ENCODE measurements at regions of chr1 and their contacts with region 1.

Region 1: GRCh38 chr1:25022361-25023189 is 92.5 kb upstream of the RUNX3 start:
- DNase-seq: peak; percentile 98
- ATAC-seq: peak; percentile 78
- H3K4me3 ChIP-seq: peak overlapping the region in 4 of 5 experiments; percentile 2 to 32 (median 23)
- H3K4me3 Mint-ChIP-seq: peak overlapping the region; percentile 78
- H3K27ac ChIP-seq: peak overlapping the region; percentile 97
- H3K27ac Mint-ChIP-seq: peak overlapping the region; percentile 94
- H3K4me1 ChIP-seq: peaks cover 49 to 67% of the 10 kb centered on the region in 2 donors
- H3K4me1 Mint-ChIP-seq: peaks cover 65% of the 10 kb centered on the region
- H3K27me3 ChIP-seq: no peaks in the 10 kb centered on the region
- H3K27me3 Mint-ChIP-seq: no peaks in the 10 kb centered on the region
- CTCF ChIP-seq: no peak

Region 2: DNA sequence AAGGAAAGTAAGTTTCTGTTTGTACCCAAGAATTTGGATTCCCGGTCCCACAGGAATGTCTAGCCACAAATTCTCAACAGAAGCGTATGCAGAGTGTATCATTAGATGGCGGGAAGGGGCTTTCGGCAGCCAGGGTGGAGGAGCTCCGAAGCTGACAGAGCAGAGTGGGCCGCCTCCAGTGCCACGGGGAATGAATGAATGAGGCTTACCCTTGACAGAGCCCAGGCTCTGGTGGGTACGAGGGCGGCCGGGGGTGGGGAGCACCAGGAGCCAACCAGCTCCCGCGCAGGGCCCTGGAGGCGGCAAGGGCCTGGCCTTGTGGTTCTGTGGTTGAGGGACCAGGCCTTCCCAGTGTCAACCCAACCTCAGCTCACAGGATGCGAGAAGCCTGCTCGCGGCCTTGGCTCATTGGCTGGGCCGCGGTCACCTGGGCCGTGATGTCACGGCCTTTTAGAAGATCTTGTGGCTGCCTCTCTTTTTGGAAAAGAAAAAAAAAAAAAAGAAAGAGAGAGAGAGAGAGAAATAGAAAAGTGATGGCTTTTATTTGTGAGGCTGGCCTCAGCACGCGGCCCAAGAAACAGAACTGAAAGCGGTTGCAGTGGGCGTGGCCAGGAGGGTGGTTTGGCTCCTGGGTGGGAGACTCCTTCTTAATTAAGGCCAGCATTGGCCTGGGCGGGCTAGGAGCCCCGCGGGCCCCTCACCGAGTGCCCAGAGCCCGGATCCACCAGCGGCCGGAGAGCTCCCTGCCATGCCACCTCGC is 57.6 kb before region 1 on chr1:
- CTCF ChIA-PET with region 1: interaction called, 9 read pairs
- POLR2A ChIA-PET with region 1: interaction called, 5 read pairs
- intact Hi-C with region 1: loop called (anchors 1 kb)
- DNase-seq: peak; percentile 93
- ATAC-seq: peak; percentile 88
- H3K4me3 ChIP-seq: peak overlapping the region in 4 of 5 experiments; percentile 10 to 40 (median 24)
- H3K4me3 Mint-ChIP-seq: peak overlapping the region; percentile 79
- H3K27ac ChIP-seq: peak overlapping the region; percentile 75 to 77
- H3K27ac Mint-ChIP-seq: peak overlapping the region; percentile 89
- H3K4me1 ChIP-seq: peaks cover 21 to 44% of the 10 kb centered on the region in 2 donors
- H3K4me1 Mint-ChIP-seq: peaks cover 50% of the 10 kb centered on the region
- H3K27me3 ChIP-seq: no peaks in the 10 kb centered on the region
- H3K27me3 Mint-ChIP-seq: no peaks in the 10 kb centered on the region
- CTCF ChIP-seq: no peak

Region 3: GRCh38 chr1:24987875-24988557 is 34.6 kb before region 1 on chr1:
- CTCF ChIA-PET with region 1: interaction called, 6 read pairs
- POLR2A ChIA-PET with region 1: interaction called, 7 read pairs
- intact Hi-C with region 1: loop called (anchors 5 kb)
- DNase-seq: peak; percentile 76
- ATAC-seq: peak; percentile 88
- H3K4me3 ChIP-seq: no peak overlapping the region
- H3K4me3 Mint-ChIP-seq: peak overlapping the region; percentile 53
- H3K27ac ChIP-seq: peak overlapping the region; percentile 12 to 27
- H3K27ac Mint-ChIP-seq: peak overlapping the region; percentile 80
- H3K4me1 ChIP-seq: peaks cover 16 to 22% of the 10 kb centered on the region in 2 donors
- H3K4me1 Mint-ChIP-seq: peaks cover 33% of the 10 kb centered on the region
- H3K27me3 ChIP-seq: peaks cover 0 to 3% (median 0%) of the 10 kb centered on the region in 4 experiments
- H3K27me3 Mint-ChIP-seq: no peaks in the 10 kb centered on the region
- CTCF ChIP-seq: no peak

Region 4: DNA sequence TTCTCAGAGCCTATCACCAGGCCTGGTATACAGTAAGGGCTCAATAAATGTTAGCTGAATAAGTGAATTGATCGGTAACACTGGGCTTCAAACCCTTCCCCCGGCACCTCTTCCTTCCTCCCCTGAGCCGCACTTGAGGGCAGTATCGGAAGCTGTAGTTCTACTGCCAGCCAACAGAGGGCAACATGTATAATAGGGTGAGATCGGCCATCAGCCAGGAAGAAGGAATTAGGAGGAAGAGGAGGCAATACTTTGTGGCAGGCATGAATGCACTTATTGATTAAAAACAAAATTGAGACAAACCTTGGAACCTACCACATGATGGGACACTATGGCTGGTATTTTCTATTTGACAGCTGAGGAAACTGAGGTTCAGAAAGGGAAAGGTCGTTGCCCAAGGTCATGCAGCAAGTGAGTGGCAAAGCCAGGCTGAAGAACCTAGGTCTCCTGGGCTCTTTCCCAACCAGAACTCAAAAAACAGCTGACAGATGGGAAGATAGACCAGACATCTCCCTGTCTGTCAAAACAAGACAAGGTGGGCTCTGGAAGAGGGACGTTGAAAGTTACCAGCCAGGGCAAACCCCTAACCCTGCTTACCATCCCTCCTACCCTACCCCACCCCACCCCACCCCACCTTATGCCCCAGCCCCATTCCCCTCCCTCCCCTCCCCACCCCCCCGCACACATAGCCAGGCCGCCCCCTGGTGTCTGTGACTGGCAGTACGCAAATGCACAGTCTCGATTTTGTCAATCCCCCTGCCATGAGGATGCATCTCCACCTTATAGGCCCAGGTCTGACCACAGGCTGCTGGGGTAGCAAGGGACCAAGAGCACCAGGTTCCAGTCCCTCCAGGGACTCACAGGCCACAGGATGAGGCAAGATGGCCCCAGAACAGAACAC is 14.8 kb after region 1 on chr1:
- CTCF ChIA-PET with region 1: interaction called, 38 read pairs
- POLR2A ChIA-PET with region 1: interaction called, 46 read pairs
- intact Hi-C with region 1: loop called (anchors 1 kb)
- DNase-seq: peak; percentile 74
- ATAC-seq: peak; percentile 65
- H3K4me3 ChIP-seq: no peak overlapping the region
- H3K4me3 Mint-ChIP-seq: peak overlapping the region; percentile 0
- H3K27ac ChIP-seq: no peak overlapping the region
- H3K27ac Mint-ChIP-seq: peak overlapping the region; percentile 63
- H3K4me1 ChIP-seq: peaks cover 36 to 49% of the 10 kb centered on the region in 2 donors
- H3K4me1 Mint-ChIP-seq: peaks cover 34% of the 10 kb centered on the region
- H3K27me3 ChIP-seq: peaks cover 0 to under 1% (median 0%) of the 10 kb centered on the region in 4 experiments
- H3K27me3 Mint-ChIP-seq: peaks cover 5% of the 10 kb centered on the region
- CTCF ChIP-seq: peak; percentile 71

Region 5: DNA sequence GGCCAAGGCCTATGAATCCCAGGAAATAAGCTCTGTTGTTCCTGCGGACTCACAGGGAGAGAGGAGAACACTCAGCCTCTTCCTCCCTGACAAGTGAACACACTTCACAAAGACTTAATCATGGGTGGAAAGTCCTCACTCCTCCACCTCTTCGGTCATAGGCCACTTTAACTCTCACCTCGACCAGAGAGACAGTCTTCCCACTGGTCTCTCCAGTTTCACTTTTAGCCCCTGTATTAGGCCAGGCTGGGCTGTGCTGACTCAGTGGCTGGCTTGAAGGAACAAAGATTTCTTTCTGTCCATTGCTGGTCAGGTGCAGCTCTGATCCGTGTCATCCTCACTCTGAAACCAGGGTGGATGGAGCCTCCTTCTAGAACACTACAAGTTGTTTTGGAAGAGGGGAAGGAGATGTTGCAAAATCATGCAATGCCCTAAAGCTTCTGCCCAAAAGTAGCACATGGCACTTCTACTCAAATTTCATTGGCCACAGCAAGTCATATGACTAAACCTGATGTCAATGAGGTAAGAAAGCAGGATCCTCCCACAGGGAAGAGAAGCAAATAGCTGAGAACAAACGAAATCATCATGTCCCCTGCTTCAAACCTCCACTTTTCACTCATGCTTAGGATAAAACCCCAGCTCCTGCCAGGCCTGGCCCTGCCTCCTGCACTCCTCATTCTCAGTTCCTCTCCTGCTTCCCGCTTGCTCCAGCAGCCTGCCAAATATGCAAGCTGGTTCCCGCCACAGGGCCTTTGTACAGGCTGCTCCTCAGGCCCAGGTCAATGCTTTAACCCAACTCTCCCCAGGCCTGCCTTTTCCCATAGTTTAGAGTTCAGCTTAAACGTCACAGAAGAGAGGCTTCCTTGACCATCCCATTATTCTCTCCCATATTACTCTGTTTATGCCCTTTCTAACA is 58.0 kb after region 1 on chr1:
- CTCF ChIA-PET with region 1: no interaction called
- POLR2A ChIA-PET with region 1: no interaction called
- intact Hi-C with region 1: no loop called
- DNase-seq: no peak
- ATAC-seq: no peak
- H3K4me3 ChIP-seq: no peak overlapping the region
- H3K4me3 Mint-ChIP-seq: no peak overlapping the region
- H3K27ac ChIP-seq: no peak overlapping the region
- H3K27ac Mint-ChIP-seq: no peak overlapping the region
- H3K4me1 ChIP-seq: no peaks in the 10 kb centered on the region
- H3K4me1 Mint-ChIP-seq: no peaks in the 10 kb centered on the region
- H3K27me3 ChIP-seq: no peaks in the 10 kb centered on the region
- H3K27me3 Mint-ChIP-seq: no peaks in the 10 kb centered on the region
- CTCF ChIP-seq: no peak

Region 6: DNA sequence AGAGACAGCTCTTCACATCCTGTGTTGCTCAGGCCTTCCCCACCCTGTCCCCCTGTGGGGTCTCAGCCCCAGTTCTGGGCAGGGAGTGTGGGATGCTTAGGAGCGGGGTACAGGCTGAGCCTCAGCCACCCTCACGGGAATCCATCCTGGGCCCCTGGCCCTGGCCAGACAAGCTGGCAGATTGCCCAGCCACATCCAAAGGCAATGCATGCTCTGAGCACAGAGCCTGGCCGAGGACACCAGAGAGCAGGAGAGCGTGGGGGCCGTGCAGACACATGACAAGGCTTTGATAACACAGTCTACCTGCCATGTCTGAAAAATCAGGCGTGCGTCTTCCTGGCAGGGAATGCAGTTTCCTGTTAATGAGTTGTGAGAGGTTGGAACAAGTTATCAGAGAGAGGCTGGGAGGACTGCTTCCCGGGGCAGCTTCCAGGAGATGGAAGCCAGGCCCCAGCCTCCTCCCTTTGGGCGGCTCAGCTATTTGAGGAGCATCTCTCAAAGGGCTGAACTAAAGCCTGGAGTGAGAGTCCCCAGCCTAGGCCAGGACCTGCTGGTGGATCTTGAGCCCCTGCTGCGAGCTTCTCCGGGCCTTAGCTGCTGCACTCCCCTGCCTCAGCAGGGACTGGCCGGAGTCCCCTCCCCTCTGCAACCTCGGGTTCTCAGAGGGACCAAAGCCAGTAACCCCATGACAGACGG is 705.2 kb after region 1 on chr1:
- CTCF ChIA-PET with region 1: no interaction called
- POLR2A ChIA-PET with region 1: no interaction called
- intact Hi-C with region 1: no loop called
- DNase-seq: no peak
- ATAC-seq: no peak
- H3K4me3 ChIP-seq: no peak overlapping the region
- H3K4me3 Mint-ChIP-seq: no peak overlapping the region
- H3K27ac ChIP-seq: no peak overlapping the region
- H3K27ac Mint-ChIP-seq: no peak overlapping the region
- H3K4me1 ChIP-seq: peaks cover 0 to 4% of the 10 kb centered on the region in 2 donors
- H3K4me1 Mint-ChIP-seq: peaks cover 5% of the 10 kb centered on the region
- H3K27me3 ChIP-seq: peaks cover 0 to 12% (median 2%) of the 10 kb centered on the region in 4 experiments
- H3K27me3 Mint-ChIP-seq: peaks cover 37% of the 10 kb centered on the region
- CTCF ChIP-seq: no peak

Measured in B cell (primary cell).